ENCODE measurements at regions of chr1 and their contacts with region 1.

Region 1: DNA sequence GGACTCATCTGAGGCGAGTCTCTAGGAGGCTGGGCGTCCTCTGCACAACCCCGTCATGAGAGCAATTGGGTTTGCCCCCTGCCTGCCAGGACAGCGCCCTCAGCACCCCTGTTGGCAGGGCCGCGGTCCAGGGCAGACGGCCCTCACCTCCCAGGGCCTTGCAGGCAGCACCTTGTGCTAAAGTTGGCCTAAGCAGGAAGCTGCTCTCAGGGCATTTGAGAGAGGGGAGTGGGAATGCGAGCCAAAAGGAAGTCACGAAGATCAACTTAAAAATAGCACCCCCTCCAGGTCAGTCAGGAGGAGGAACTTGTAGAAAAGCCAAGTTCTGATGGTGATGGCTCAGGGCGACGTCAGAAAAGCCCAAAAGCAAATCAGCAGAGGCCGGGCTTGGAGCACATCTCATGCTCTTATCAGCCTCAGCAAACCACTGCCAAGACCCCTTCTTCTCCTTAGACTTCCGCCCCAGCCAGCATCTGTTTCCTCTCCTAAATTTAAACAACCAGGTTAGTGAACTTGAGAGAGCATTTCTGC is 12.6 kb upstream of the ADORA3 start:
- DNase-seq: no peak
- H3K4me3 Mint-ChIP-seq: peak overlapping the region; percentile 13
- H3K27ac Mint-ChIP-seq: peak overlapping the region; percentile 63
- H3K4me1 Mint-ChIP-seq: peaks cover 47% of the 10 kb centered on the region
- H3K27me3 Mint-ChIP-seq: peaks cover 2% of the 10 kb centered on the region

Region 2: GRCh38 chr1:111323231-111323630 is 192.8 kb before region 1 on chr1:
- intact Hi-C with region 1: no loop called
- DNase-seq: no peak
- H3K4me3 Mint-ChIP-seq: no peak overlapping the region
- H3K27ac Mint-ChIP-seq: no peak overlapping the region
- H3K4me1 Mint-ChIP-seq: peaks cover 6% of the 10 kb centered on the region
- H3K27me3 Mint-ChIP-seq: peaks cover 5% of the 10 kb centered on the region

Region 3: GRCh38 chr1:111496398-111496797 is 19.7 kb before region 1 on chr1:
- intact Hi-C with region 1: loop called (anchors 1 kb)
- DNase-seq: no peak
- H3K4me3 Mint-ChIP-seq: peak overlapping the region; percentile 5
- H3K27ac Mint-ChIP-seq: peak overlapping the region; percentile 54
- H3K4me1 Mint-ChIP-seq: peaks cover 20% of the 10 kb centered on the region
- H3K27me3 Mint-ChIP-seq: peaks cover 4% of the 10 kb centered on the region

Region 4: GRCh38 chr1:111553196-111553595 is 37.1 kb after region 1 on chr1:
- intact Hi-C with region 1: loop called (anchors 5 kb)
- DNase-seq: no peak
- H3K4me3 Mint-ChIP-seq: no peak overlapping the region
- H3K27ac Mint-ChIP-seq: no peak overlapping the region
- H3K4me1 Mint-ChIP-seq: peaks cover 17% of the 10 kb centered on the region
- H3K27me3 Mint-ChIP-seq: peaks cover 32% of the 10 kb centered on the region

Region 5: GRCh38 chr1:111747282-111747734 is 231.2 kb after region 1 on chr1:
- intact Hi-C with region 1: no loop called
- DNase-seq: peak; percentile 70
- H3K4me3 Mint-ChIP-seq: no peak overlapping the region
- H3K27ac Mint-ChIP-seq: no peak overlapping the region
- H3K4me1 Mint-ChIP-seq: peaks cover 14% of the 10 kb centered on the region
- H3K27me3 Mint-ChIP-seq: peaks cover 28% of the 10 kb centered on the region